Activated CD4-positive, alpha-beta T cell treated with anti-CD3 and anti-CD28 coated beads for 36 hours (primary cell): ENCODE measurements at regions of chr9 and their contacts with region 1.

Region 1: DNA sequence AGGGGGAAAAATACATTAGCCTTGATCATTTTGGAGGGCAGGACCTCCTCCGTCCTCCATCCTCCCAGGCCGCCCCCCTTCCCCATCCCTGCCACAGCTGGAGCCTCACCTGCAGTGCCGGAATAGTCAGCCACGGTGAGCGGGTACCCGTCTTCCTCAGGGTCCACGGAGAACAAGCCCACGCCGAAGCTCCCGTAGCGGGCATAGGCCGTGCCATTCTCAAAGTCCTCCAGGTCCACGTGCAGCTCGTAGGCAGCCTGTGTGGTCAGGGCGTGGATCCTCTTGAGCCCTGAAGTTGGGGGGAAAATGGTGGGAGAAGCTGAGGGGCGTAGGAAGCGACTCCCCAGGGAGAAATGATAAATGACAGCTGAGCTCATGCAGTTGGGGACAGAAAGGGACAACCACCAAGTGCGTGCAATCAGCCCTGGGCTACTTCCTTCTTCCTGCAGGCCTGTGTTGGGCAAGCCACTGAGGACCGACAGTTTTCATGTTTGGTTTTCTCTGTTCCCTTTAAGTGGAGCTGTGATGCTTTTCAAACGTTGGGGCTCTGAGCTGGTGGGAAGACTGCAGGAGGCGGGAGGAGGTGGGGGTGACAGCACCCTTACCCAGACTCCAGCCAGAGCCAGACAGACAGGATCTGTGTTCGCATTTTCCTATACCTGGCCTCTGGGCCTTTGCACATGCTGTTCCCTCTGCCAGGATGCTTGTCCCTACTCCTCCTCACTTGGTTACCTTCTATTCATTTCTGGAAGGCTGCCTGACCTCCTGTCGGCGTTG is 8.7 kb upstream of the QRFP start:
- DNase-seq: no peak
- ATAC-seq: no peak
- H3K4me3 Mint-ChIP-seq: no peak overlapping the region
- H3K27ac Mint-ChIP-seq: no peak overlapping the region
- H3K4me1 Mint-ChIP-seq: no peaks in the 10 kb centered on the region
- H3K27me3 Mint-ChIP-seq: peaks cover 8% of the 10 kb centered on the region

Region 2: GRCh38 chr9:131559421-131560000 is 654.2 kb after region 1 on chr9:
- CTCF ChIA-PET with region 1: no interaction called
- POLR2A ChIA-PET with region 1: interaction called, 12 read pairs
- intact Hi-C with region 1: no loop called
- DNase-seq: no peak
- ATAC-seq: no peak
- H3K4me3 Mint-ChIP-seq: no peak overlapping the region
- H3K27ac Mint-ChIP-seq: no peak overlapping the region
- H3K4me1 Mint-ChIP-seq: no peaks in the 10 kb centered on the region
- H3K27me3 Mint-ChIP-seq: peaks cover 13% of the 10 kb centered on the region